ENCODE measurements at regions of chr19 and their contacts with region 1.

Region 1: GRCh38 chr19:46265217-46265828 is 31.5 kb upstream of the HIF3A start:
- DNase-seq: peak; percentile 78
- H3K4me3 Mint-ChIP-seq: no peak overlapping the region
- H3K27ac Mint-ChIP-seq: no peak overlapping the region
- H3K4me1 Mint-ChIP-seq: peaks cover 16% of the 10 kb centered on the region
- H3K27me3 Mint-ChIP-seq: peaks cover 52% of the 10 kb centered on the region

Region 2: GRCh38 chr19:46030812-46031550 is 234.3 kb before region 1 on chr19:
- CTCF ChIA-PET with region 1: interaction called, 116 read pairs
- POLR2A ChIA-PET with region 1: interaction called, 4 read pairs
- intact Hi-C with region 1: loop called (anchors 1 kb)
- DNase-seq: no peak
- H3K4me3 Mint-ChIP-seq: no peak overlapping the region
- H3K27ac Mint-ChIP-seq: no peak overlapping the region
- H3K4me1 Mint-ChIP-seq: peaks cover 10% of the 10 kb centered on the region
- H3K27me3 Mint-ChIP-seq: peaks cover 13% of the 10 kb centered on the region

Region 3: GRCh38 chr19:46115396-46116106 is 149.8 kb before region 1 on chr19:
- CTCF ChIA-PET with region 1: interaction called, 7 read pairs
- POLR2A ChIA-PET with region 1: interaction called, 5 read pairs
- intact Hi-C with region 1: loop called (anchors 1 kb)
- DNase-seq: peak; percentile 81
- H3K4me3 Mint-ChIP-seq: no peak overlapping the region
- H3K27ac Mint-ChIP-seq: no peak overlapping the region
- H3K4me1 Mint-ChIP-seq: peaks cover 11% of the 10 kb centered on the region
- H3K27me3 Mint-ChIP-seq: peaks cover 56% of the 10 kb centered on the region

Region 4: DNA sequence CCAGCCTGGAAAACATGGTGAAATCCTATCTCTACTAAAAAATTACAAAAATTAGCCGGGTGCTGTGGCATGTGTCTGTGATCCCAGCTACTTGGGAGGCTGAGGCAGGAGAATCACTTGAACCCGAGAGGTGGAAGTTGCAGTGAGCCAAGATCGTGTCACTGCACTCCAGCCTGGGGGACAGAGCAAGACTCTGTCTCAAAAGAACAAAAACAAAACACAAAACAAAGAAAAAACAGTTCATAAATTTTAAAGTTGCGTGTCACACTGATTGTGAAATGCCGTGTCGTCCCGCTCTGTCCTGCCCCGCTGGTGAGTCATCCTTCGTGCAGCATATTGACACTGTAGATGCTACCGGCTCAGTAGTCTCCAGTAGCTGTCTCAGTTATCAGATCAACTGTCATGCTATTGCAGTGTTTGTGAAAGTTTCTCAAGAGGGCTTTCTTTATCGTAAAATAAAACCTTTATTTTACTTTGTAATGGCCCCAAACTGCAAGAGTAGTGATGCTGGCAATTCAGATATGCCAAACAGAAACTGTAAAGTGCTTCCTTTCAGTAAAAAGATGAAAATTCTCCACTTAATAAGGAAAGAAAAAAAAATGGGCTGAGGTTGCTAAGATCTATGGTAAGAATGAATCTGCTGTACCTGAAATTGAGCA is 72.2 kb before region 1 on chr19:
- CTCF ChIA-PET with region 1: interaction called, 10 read pairs
- POLR2A ChIA-PET with region 1: no interaction called
- intact Hi-C with region 1: loop called (anchors 5 kb)
- DNase-seq: peak; percentile 47
- H3K4me3 Mint-ChIP-seq: no peak overlapping the region
- H3K27ac Mint-ChIP-seq: no peak overlapping the region
- H3K4me1 Mint-ChIP-seq: peaks cover 2% of the 10 kb centered on the region
- H3K27me3 Mint-ChIP-seq: peaks cover 57% of the 10 kb centered on the region

Measured in activated CD4-positive, alpha-beta memory T cell treated with anti-CD3 and anti-CD28 coated beads for 36 hours (primary cell).